Colonic mucosa (tissue), 4 donors: ENCODE measurements at regions of chr16 and their contacts with region 1.

Region 1: DNA sequence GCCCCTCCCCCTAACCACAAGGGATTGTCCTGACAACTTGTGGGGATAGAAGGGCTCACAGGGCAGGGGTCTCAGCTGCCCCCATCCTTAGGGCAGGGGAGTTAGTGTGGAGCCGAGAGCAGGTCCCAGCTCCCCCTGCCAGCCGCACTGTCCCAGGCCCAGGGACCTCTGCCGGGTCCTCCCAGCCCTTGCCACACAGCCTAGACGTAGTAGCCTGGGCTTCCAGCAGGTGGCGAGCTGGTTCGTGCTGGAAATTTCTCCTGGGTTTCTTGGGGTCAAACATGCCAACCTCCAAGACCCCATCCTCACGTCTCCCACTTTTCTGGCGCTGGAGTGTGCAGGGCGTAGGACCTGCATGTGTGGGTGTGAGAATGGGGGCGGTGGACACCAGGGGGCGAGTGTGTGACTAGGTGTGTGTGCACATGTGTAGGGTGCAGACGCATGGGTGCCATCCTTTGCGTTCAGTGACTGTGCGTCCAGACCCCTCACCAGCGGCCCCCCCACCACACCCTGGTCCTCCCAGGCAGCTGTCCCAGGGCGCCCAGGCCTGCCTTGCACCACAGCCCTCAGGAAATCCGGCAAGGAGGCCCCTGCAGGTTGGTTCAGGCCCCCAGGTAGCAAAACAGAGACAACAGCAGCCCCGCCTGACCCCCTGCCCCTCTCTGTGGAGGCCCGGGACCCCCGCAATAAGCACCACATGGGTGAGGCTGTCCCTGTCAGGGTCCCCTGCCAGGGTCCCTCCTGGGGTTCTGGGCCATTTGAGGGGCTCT is 29.6 kb downstream of the SBK1 start:
- DNase-seq: peak; percentile 32
- H3K4me3 ChIP-seq: no peak overlapping the region
- H3K27ac ChIP-seq: no peak overlapping the region
- H3K4me1 ChIP-seq: no peaks in the 10 kb centered on the region
- H3K27me3 ChIP-seq: no peaks in the 10 kb centered on the region
- CTCF ChIP-seq: peak; percentile 74

Region 2: DNA sequence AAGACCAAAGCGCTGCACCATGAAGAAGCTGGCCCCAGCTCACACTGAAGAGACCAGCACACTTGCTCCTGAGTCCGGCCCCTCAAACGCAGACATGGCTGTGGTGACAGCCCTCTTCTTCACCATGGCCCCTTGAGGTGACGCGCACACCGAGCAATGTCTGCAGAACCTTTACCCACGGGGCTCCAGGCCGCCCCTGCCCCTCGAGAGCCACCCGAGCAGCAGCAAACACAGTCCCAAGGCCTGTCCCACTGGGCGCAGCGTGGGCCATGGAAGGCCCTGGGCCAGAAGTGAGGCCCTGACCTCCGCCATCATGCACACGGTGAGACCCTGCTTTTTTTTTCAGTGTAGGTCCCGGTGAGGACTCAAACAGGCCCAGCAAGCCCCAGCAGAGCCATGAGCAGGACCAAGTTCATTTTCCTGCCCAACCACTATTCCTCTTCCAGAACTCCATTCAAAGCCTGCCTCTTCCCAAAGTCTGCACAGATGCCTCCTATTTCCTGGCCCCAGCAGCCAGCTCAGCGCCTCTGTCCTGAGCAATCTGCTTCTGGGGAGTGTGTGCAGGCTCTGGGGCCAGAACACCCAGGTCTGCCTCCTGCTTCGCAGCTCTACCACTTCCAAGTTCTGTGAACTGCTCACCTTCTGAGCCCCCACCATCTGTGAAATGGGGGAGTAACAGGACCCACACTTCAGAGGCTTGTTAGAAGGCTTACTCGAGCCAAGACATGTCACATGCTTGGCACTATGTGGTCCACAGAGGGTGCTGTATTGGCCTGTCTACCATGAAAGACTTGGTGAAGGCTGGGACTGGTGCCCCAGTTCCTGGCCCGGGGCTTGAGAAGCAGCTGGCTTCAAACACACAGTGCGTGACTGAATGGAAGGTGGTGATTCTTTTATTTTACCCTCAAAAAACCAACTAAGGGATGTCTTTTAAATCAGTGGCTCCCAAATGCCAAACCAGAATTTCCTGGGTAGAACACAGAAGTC is 222.6 kb before region 1 on chr16:
- intact Hi-C with region 1: no loop called
- DNase-seq: no peak
- H3K4me3 ChIP-seq: no peak overlapping the region
- H3K27ac ChIP-seq: no peak overlapping the region
- H3K4me1 ChIP-seq: no peaks in the 10 kb centered on the region
- H3K27me3 ChIP-seq: no peaks in the 10 kb centered on the region
- CTCF ChIP-seq: no peak

Region 3: GRCh38 chr16:28273511-28273910 is 48.4 kb before region 1 on chr16:
- intact Hi-C with region 1: loop called (anchors 5 kb)
- DNase-seq: no peak
- H3K4me3 ChIP-seq: no peak overlapping the region
- H3K27ac ChIP-seq: no peak overlapping the region
- H3K4me1 ChIP-seq: peaks cover 5% of the 10 kb centered on the region
- H3K27me3 ChIP-seq: no peaks in the 10 kb centered on the region
- CTCF ChIP-seq: no peak